ENCODE measurements at regions of chr14 and their contacts with region 1.

Region 1: GRCh38 chr14:92106143-92106926 is at the start of gene ATXN3:
- DNase-seq: peak; percentile 97
- H3K4me3 Mint-ChIP-seq: peak within 1 kb of the TSS; percentile 98
- H3K27ac Mint-ChIP-seq: peak within 1 kb of the TSS; percentile 81
- H3K4me1 Mint-ChIP-seq: peaks cover 40% of the 10 kb centered on the region
- H3K27me3 Mint-ChIP-seq: no peaks in the 10 kb centered on the region
- total RNA-seq, gene ATXN3: 25.0 to 27.1 TPM

Region 2: GRCh38 chr14:91893007-91893406 is 213.3 kb before region 1 on chr14:
- CTCF ChIA-PET with region 1: no interaction called
- intact Hi-C with region 1: no loop called
- DNase-seq: peak; percentile 62
- H3K4me3 Mint-ChIP-seq: no peak overlapping the region
- H3K27ac Mint-ChIP-seq: peak overlapping the region; percentile 92
- H3K4me1 Mint-ChIP-seq: peaks cover 56% of the 10 kb centered on the region
- H3K27me3 Mint-ChIP-seq: no peaks in the 10 kb centered on the region

Region 3: GRCh38 chr14:92039719-92040430 is 66.5 kb before region 1 on chr14 and contains the start of gene TRIP11:
- CTCF ChIA-PET with region 1: interaction called, 5 read pairs
- intact Hi-C with region 1: loop called (anchors 1 kb)
- DNase-seq: peak; percentile 97
- H3K4me3 Mint-ChIP-seq: peak within 1 kb of the TSS; percentile 98
- H3K27ac Mint-ChIP-seq: peak within 1 kb of the TSS; percentile 98
- H3K4me1 Mint-ChIP-seq: peaks cover 32% of the 10 kb centered on the region
- H3K27me3 Mint-ChIP-seq: no peaks in the 10 kb centered on the region
- total RNA-seq, gene TRIP11: 22.7 to 26.1 TPM

Region 4: DNA sequence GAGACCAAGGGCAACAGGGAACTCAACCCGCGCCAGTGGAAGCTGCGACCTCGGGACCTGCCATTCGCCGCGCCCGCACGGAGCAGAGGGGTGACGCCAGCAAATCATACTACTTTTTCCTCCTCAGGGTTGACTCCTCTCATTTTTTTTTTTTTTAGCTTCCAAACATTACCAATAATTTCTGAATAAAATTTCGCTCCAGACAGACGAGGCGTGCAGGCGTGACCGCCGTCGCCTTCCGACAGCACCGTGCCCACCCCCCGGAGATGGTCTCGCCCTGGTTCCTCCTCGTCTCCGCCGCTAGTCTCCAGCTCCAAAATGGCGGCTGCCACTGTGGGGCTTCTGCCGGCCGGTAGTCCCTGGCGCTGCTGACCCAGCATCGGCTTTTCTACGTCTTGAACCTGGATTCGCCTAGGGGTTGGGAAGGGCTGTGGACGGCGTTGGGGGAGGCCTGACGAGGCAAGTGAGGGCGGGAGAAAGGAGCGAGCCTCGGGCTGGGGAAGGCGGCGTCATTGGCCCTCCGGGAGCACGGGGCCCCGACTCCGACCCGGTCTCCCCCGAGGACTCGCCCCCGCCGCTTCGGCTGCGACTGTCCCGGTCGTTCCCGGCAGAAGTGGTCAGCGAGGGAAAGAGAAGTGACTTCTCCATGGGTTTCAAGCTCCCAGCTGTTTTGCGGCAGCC is 15.5 kb after region 1 on chr14 and contains the starts of genes CPSF2 and NDUFB1:
- CTCF ChIA-PET with region 1: interaction called, 96 read pairs
- intact Hi-C with region 1: loop called (anchors 1 kb)
- DNase-seq: peak; percentile 90
- H3K4me3 Mint-ChIP-seq: peak within 1 kb of the TSS; percentile 99
- H3K27ac Mint-ChIP-seq: peak within 1 kb of the TSS; percentile 100
- H3K4me1 Mint-ChIP-seq: peaks cover 41% of the 10 kb centered on the region
- H3K27me3 Mint-ChIP-seq: no peaks in the 10 kb centered on the region
- total RNA-seq, gene CPSF2: 103 to 115 TPM
- total RNA-seq, gene NDUFB1: 111 to 114 TPM